CD4-positive, alpha-beta T cell (primary cell): ENCODE measurements at regions of chr22 and their contacts with region 1.

Region 1: GRCh38 chr22:20741634-20742581 is 32.0 kb upstream of the SERPIND1 start:
- DNase-seq: peak in 12 of 14 experiments; percentile 9 to 67 (median 36)
- ATAC-seq: no peak
- H3K4me3 ChIP-seq: no peak overlapping the region
- H3K4me3 Mint-ChIP-seq: no peak overlapping the region
- H3K27ac ChIP-seq: no peak overlapping the region
- H3K27ac Mint-ChIP-seq: no peak overlapping the region
- H3K4me1 ChIP-seq: no peaks in the 10 kb centered on the region
- H3K4me1 Mint-ChIP-seq: peaks cover 5% of the 10 kb centered on the region
- H3K27me3 ChIP-seq: no peaks in the 10 kb centered on the region
- H3K27me3 Mint-ChIP-seq: no peaks in the 10 kb centered on the region
- CTCF ChIP-seq: peak; percentile 81

Region 2: DNA sequence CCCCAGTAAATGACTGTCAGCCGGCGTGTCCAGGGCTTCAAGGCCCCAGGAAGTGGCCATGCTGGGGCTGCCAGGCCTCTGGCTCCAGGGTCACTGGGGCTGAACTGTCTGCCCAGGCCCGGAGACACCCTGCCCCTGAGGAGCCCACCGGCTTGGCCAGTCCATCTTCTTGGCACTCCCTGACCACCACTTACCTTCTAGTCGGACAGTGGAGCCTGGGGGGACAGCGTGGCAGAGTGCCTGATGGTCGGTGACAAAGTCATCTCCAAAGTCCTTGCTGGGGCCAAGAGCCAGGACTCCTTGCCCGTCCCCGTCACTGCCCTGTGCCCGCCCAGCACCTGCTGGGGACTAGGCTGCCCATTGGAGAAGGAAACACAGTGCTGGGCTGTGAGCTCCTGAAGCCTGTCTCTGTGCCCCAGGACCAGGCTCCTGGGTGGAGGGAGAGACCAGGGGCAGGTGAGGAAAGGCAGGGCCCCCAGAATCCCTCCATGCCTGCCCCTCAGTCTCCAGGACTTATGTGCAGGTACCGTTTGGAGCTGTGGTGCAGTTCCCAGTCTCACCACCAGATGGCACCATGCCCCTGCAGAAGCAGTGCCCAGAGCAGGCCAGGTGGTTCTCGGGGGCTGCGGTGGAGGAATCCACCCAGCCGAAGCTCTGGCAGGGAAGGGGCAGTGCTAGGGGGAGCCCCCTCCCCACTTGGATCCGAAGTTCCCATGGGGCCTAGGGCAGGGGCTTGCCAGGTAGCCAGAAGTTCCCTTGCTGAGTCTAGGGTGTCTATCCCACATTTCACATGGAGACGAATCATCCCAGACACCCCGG is 585.1 kb before region 1 on chr22:
- CTCF ChIA-PET with region 1: interaction called, 5 read pairs
- POLR2A ChIA-PET with region 1: no interaction called
- intact Hi-C with region 1: loop called in 1 of 2 experiments (anchors 5 kb)
- DNase-seq: peak; percentile 75 to 96 (median 86)
- ATAC-seq: peak; percentile 95
- H3K4me3 ChIP-seq: no peak overlapping the region
- H3K4me3 Mint-ChIP-seq: no peak overlapping the region
- H3K27ac ChIP-seq: no peak overlapping the region
- H3K27ac Mint-ChIP-seq: no peak overlapping the region
- H3K4me1 ChIP-seq: peaks cover 21% of the 10 kb centered on the region
- H3K4me1 Mint-ChIP-seq: peaks cover 4% of the 10 kb centered on the region
- H3K27me3 ChIP-seq: peaks cover 4 to 6% of the 10 kb centered on the region in 2 experiments
- H3K27me3 Mint-ChIP-seq: peaks cover 5% of the 10 kb centered on the region
- CTCF ChIP-seq: peak; percentile 99

Region 3: GRCh38 chr22:20606041-20606783 is 135.7 kb before region 1 on chr22:
- CTCF ChIA-PET with region 1: interaction called, 6 read pairs
- POLR2A ChIA-PET with region 1: no interaction called
- intact Hi-C with region 1: loop called (anchors 1 kb)
- DNase-seq: peak; percentile 52 to 87 (median 66)
- ATAC-seq: peak; percentile 97
- H3K4me3 ChIP-seq: no peak overlapping the region
- H3K4me3 Mint-ChIP-seq: no peak overlapping the region
- H3K27ac ChIP-seq: no peak overlapping the region
- H3K27ac Mint-ChIP-seq: peak overlapping the region; percentile 59
- H3K4me1 ChIP-seq: peaks cover 15% of the 10 kb centered on the region
- H3K4me1 Mint-ChIP-seq: peaks cover 10% of the 10 kb centered on the region
- H3K27me3 ChIP-seq: no peaks in the 10 kb centered on the region
- H3K27me3 Mint-ChIP-seq: no peaks in the 10 kb centered on the region
- CTCF ChIP-seq: peak; percentile 75